Endothelial cell of umbilical vein (primary cell): ENCODE measurements at regions of chr11 and their contacts with region 1.

Region 1: GRCh38 chr11:120335908-120336640 is at the start of gene ARHGEF12:
- DNase-seq: peak; percentile 95
- H3K4me3 ChIP-seq: peak within 1 kb of the TSS; percentile 82 to 98 (median 96)
- H3K27ac ChIP-seq: peak within 1 kb of the TSS; percentile 87
- H3K4me1 ChIP-seq: peaks cover 40% of the 10 kb centered on the region
- H3K27me3 ChIP-seq: no peaks in the 10 kb centered on the region
- CTCF ChIP-seq: peak; percentile 42 to 56
- POLR2A ChIP-seq: peak; percentile 80
- total RNA-seq, gene ARHGEF12: 117 and 125 TPM in 2 replicates

Region 2: GRCh38 chr11:120391292-120391691 is 55.2 kb after region 1 on chr11:
- CTCF ChIA-PET with region 1: interaction called, 13 read pairs
- POLR2A ChIA-PET with region 1: no interaction called
- dilution Hi-C with region 1: no loop called
- intact Hi-C with region 1: no loop called
- DNase-seq: peak; percentile 74
- H3K4me3 ChIP-seq: no peak overlapping the region
- H3K27ac ChIP-seq: no peak overlapping the region
- H3K4me1 ChIP-seq: peaks cover 23% of the 10 kb centered on the region
- H3K27me3 ChIP-seq: no peaks in the 10 kb centered on the region
- CTCF ChIP-seq: no peak
- POLR2A ChIP-seq: no peak

Region 3: DNA sequence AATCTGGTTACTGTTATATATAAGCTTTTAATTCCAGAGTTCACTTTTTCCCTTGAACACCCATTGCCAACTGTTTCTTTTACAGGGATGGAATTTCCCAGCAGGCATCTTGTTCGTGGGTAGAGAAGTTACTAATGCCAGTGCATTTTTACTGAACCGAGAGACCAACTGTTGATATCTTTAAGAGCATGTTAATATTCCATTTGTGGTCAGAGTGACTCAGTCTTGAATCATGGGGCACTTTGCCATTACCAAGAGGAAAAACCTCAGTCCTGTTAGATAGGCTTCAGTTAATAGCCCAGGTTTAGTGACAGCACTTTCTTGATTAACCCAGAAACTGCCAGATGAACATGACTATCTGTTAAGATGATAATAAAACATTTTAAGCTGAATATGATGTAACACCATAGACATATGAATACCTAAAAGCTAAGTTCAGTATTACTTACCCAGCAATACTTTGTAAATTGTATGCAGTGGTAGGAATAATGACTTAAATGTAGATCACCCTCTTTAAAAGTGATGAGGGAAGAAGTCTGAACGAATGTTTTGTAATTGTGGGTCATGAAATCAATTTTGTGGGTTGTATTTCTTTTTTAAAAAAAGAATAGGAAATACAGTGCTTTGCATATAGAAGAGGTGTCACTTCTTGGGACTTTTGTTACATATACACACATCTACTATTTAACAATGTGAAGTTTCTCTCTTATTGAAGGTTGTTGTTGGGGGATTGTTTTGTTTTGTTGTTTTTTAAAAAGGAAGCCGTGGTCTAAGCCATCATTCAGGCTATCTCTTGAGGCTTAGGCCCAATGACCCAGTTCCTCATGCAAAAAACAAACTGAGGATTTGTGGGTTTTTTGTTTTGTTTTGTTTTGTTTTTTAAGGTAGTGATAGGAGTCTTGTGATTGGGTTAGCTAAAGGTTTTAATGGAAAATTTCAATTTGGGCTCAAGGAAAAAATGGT is 96.3 kb after region 1 on chr11:
- CTCF ChIA-PET with region 1: interaction called, 27 read pairs
- POLR2A ChIA-PET with region 1: no interaction called
- dilution Hi-C with region 1: no loop called
- intact Hi-C with region 1: loop called (anchors 1 kb)
- DNase-seq: peak; percentile 97
- H3K4me3 ChIP-seq: no peak overlapping the region
- H3K27ac ChIP-seq: peak overlapping the region; percentile 75
- H3K4me1 ChIP-seq: peaks cover 20% of the 10 kb centered on the region
- H3K27me3 ChIP-seq: no peaks in the 10 kb centered on the region
- CTCF ChIP-seq: no peak
- POLR2A ChIP-seq: no peak

Region 4: DNA sequence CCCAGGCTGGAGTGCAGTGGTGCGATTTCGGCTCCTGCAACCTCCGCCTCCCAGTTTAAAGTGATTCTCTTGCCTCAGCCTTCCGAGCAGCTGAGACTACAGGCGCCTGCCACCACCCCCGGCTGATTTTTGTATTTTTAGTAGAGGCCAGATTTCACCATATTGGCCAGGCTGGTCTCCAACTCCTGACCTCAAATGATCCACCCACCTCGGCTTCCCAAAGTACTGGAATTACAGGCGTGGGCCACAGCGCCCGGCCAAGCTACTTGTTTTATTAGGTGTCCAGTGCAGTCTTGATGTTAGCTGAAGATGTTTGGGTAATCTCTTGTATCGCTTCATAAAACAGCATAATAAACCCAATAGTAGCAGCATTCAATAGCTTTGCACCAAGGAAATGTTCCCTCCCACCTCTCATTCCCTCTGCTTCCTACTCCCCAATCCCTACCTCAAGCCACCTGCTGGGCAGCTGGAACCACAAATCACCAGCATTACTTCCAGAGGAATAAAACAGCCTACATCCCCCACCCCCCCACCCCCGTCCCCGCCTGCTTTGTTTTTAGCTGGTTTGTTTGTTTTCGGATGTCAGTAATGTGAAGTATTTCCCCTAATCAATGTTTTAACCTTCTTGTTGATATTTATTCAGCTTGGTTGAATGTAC is 164.5 kb after region 1 on chr11:
- CTCF ChIA-PET with region 1: interaction called, 12 read pairs
- POLR2A ChIA-PET with region 1: no interaction called
- dilution Hi-C with region 1: no loop called
- intact Hi-C with region 1: loop called (anchors 2 kb)
- DNase-seq: peak; percentile 10
- H3K4me3 ChIP-seq: no peak overlapping the region
- H3K27ac ChIP-seq: no peak overlapping the region
- H3K4me1 ChIP-seq: peaks cover 4% of the 10 kb centered on the region
- H3K27me3 ChIP-seq: peaks cover 0 to 3% of the 10 kb centered on the region in 2 experiments
- CTCF ChIP-seq: no peak
- POLR2A ChIP-seq: no peak

Region 5: DNA sequence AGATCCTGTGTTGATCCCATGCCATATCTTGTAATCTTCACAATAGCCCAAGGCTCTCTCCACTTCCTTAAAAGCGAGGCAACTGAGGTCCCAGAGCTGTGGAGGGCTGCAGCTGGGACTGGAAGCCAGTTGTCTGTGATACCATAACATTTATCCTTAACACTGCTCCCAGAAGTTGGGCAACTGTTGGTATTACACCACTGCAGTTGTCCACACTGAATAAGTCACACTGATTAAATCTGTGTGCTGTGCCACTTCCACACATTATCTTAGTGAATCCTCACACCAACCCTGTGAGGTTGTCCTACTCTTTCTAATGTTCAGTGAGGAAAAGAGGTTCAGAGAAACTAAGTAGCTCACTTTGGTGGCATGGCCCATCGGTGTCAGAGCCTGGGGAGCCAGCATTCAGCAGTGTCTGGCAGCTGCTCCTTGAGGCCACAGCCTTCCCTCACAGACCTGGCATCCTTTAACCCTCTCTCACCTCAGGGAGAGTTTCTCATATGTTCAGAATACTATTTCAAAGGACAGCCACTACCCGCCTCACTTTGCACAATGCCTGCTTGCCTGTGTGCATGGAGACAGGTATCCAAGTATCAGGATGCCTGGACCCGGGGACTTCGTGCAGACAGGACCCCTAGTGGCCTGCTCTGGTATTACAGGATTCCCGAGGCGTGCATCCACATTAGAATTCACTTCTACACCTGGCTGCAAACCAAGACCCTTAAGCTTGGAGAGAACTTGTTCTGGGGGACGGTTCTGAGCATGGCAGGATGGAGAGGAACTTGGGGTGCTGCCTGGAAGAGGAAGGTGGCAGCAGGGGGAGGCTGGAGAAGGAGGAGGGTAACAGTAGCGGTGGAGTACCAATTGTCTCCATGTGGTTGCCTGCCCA is 466.0 kb after region 1 on chr11:
- CTCF ChIA-PET with region 1: interaction called, 3 read pairs
- POLR2A ChIA-PET with region 1: no interaction called
- dilution Hi-C with region 1: no loop called
- intact Hi-C with region 1: loop called (anchors 2 kb)
- DNase-seq: peak; percentile 58
- H3K4me3 ChIP-seq: no peak overlapping the region
- H3K27ac ChIP-seq: no peak overlapping the region
- H3K4me1 ChIP-seq: peaks cover 2% of the 10 kb centered on the region
- H3K27me3 ChIP-seq: no peaks in the 10 kb centered on the region
- CTCF ChIP-seq: peak; percentile 89 to 91
- POLR2A ChIP-seq: no peak

Region 6: DNA sequence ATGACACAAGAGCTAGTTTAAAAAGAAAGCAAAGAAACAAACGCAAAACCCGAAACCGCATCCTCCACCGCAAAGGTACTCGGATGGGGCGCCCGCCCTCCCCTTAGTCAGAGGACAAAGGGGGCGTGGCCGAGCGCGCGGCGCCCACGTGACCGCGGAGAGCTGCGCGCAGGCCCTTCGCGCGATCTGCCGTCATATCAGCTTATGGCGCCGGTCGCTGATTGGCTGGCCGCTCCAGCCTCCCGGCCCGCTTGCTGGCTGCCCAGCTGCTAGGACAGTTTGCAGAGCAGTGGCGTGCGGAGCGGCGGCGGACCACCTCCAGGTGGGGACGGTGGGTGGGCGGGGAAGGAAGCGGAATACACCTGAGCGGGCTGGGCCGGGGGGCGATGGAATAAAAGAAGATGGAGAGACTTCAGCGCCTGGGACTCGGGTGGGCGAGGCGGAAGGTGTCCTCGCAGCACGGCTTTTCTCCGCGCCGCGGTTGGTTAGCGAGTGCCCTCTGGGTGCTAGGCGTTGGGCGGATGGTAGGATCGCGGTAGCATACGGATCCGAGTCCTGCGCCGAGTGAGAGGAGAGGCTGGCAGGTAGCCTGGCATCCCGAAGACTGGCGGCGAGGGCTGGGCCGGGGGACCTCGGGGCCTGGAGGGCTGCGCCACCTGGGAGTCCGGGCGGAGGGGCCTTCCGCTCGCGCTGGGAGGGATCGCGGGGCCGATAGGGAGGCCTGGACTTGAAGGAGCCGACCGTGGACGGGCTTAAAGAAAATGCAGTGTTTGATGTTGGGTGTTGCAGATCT is 956.6 kb after region 1 on chr11 and contains the start of gene SC5D:
- CTCF ChIA-PET with region 1: no interaction called
- POLR2A ChIA-PET with region 1: no interaction called
- dilution Hi-C with region 1: no loop called
- intact Hi-C with region 1: loop called (anchors 10 kb)
- DNase-seq: peak; percentile 94
- H3K4me3 ChIP-seq: peak within 1 kb of the TSS; percentile 50 to 92 (median 86)
- H3K27ac ChIP-seq: peak within 1 kb of the TSS; percentile 58
- H3K4me1 ChIP-seq: peaks cover 15% of the 10 kb centered on the region
- H3K27me3 ChIP-seq: peaks cover 3% of the 10 kb centered on the region in 2 experiments
- CTCF ChIP-seq: no peak
- POLR2A ChIP-seq: peak; percentile 81
- total RNA-seq, gene SC5D: 40.0 and 40.2 TPM in 2 replicates